Dendritic cell treated with granulocyte-macrophage colony-stimulating factor and Interleukin-4, amounts not matched to agents 40 ng/mL and 50 ng/mL, for 4 days (primary cell): ENCODE measurements at regions of chr11 and their contacts with region 1.

Region 1: GRCh38 chr11:110497231-110497978 is 67.7 kb downstream of the FDX1 start:
- H3K4me3 Mint-ChIP-seq: no peak overlapping the region
- H3K27ac Mint-ChIP-seq: peak overlapping the region; percentile 75
- H3K4me1 Mint-ChIP-seq: peaks cover 42% of the 10 kb centered on the region
- H3K27me3 Mint-ChIP-seq: no peaks in the 10 kb centered on the region

Region 2: GRCh38 chr11:110479108-110480101 is 18.0 kb before region 1 on chr11:
- intact Hi-C with region 1: loop called (anchors 2 kb)
- H3K4me3 Mint-ChIP-seq: peak overlapping the region; percentile 32
- H3K27ac Mint-ChIP-seq: peak overlapping the region; percentile 79
- H3K4me1 Mint-ChIP-seq: peaks cover 49% of the 10 kb centered on the region
- H3K27me3 Mint-ChIP-seq: no peaks in the 10 kb centered on the region

Region 3: GRCh38 chr11:110522456-110522855 is 25.1 kb after region 1 on chr11:
- intact Hi-C with region 1: no loop called
- H3K4me3 Mint-ChIP-seq: no peak overlapping the region
- H3K27ac Mint-ChIP-seq: no peak overlapping the region
- H3K4me1 Mint-ChIP-seq: no peaks in the 10 kb centered on the region
- H3K27me3 Mint-ChIP-seq: peaks cover 2% of the 10 kb centered on the region

Region 4: DNA sequence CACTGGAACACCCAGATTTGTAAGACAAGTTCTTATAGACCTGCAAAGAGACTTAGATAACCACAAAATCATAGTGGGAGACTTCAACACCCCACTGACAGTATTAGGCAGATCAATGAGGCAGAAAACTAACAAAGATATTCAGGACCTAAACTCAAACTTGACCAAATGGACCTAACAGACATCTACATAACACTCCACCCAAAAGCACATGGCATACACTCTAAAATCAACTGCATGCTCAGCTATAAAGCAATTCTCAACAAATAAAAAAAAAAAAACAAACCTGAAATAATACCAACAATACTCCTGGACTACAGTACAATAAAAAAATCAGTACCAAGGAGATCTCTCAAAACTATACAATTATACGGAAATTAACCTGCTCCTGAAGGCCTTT is 47.4 kb after region 1 on chr11:
- intact Hi-C with region 1: no loop called
- H3K4me3 Mint-ChIP-seq: no peak overlapping the region
- H3K27ac Mint-ChIP-seq: no peak overlapping the region
- H3K4me1 Mint-ChIP-seq: no peaks in the 10 kb centered on the region
- H3K27me3 Mint-ChIP-seq: no peaks in the 10 kb centered on the region